A673 (cell line): ENCODE measurements at regions of chr15 and their contacts with region 1.

Region 1: DNA sequence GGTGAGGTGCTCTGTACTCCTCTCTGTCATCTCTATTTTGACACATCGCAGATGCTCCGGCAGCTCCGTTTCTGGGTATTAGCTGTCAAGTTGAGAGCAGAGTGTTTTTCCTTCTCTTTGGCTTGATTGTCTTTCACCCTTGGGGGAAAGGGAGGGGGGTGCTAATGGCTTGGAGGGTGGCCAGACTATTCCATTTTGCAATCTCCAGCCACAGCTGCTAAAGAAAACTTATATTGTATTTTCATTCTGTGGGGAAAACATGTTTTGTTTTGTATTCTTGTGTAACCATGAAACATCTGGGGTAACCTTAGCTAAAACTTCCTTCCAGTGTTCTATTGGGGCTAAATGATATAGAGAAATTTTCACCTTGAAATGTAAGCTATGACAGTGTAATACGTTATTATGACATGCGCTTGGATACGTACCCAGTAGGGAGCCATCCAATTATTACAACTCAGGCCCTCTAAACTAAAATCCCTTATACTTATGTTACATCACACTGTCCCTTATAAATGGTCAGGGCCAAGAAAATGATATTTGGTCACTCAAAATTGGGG is 14.0 kb upstream of the LARP6 start:
- DNase-seq: no peak
- H3K4me3 ChIP-seq: no peak overlapping the region
- H3K27ac ChIP-seq: peak overlapping the region; percentile 53
- H3K4me1 ChIP-seq: peaks cover 32% of the 10 kb centered on the region
- H3K27me3 ChIP-seq: no peaks in the 10 kb centered on the region
- CTCF ChIP-seq: no peak

Region 2: GRCh38 chr15:70492240-70493177 is 375.5 kb before region 1 on chr15:
- CTCF ChIA-PET with region 1: no interaction called
- POLR2A ChIA-PET with region 1: no interaction called
- intact Hi-C with region 1: no loop called
- DNase-seq: no peak
- H3K4me3 ChIP-seq: no peak overlapping the region
- H3K27ac ChIP-seq: no peak overlapping the region
- H3K4me1 ChIP-seq: peaks cover 23% of the 10 kb centered on the region
- H3K27me3 ChIP-seq: no peaks in the 10 kb centered on the region
- CTCF ChIP-seq: no peak

Region 3: GRCh38 chr15:70833897-70834765 is 33.9 kb before region 1 on chr15:
- CTCF ChIA-PET with region 1: interaction called, 12 read pairs
- POLR2A ChIA-PET with region 1: no interaction called
- intact Hi-C with region 1: loop called (anchors 5 kb)
- DNase-seq: peak; percentile 84
- H3K4me3 ChIP-seq: no peak overlapping the region
- H3K27ac ChIP-seq: peak overlapping the region; percentile 81
- H3K4me1 ChIP-seq: peaks cover 31% of the 10 kb centered on the region
- H3K27me3 ChIP-seq: no peaks in the 10 kb centered on the region
- CTCF ChIP-seq: no peak

Region 4: DNA sequence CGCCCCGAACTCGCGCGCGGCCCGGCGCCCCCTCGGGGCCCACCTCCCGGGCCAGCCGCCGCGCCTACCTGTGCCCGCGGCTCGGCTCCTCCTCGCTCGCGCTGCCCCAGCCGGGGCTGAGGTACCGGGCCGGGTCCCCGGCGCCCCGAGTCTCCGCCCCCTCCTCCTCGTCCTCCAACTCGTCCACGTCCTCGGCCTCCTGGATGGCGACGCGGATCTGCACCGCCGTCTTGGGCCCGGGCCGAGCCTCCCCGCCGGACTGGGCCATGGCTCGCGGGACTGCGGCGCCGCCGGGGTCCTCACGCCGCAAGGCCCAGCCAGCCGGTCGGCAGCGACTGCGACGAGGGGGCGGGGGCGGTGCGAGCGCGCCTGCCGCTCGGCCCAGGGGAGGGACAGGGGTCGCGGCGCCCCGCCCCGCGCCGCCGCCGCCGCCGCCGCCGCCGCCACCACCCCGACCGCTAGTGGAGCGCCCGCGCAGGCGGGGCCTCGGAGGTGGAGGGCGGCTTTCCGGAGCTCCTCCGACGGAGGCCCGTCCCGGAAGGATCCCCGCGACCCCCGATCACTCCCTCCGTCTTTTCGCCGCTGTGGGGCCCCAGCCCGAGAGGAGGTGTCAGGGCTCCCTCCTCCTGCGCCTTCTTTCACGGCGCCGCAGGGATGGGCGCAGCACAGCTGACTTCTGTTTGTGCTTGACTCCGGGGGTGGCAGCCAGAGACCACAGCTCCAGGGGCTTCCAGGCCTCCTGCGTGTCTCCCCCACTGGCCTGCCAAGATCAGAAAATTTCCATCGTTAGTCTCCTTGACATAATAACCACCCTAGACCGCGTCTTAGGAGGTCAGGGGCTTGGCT is 13.9 kb before region 1 on chr15 and contains the start of gene LARP6:
- CTCF ChIA-PET with region 1: interaction called, 21 read pairs
- POLR2A ChIA-PET with region 1: interaction called, 4 read pairs
- intact Hi-C with region 1: loop called (anchors 1 kb)
- DNase-seq: peak; percentile 71
- H3K4me3 ChIP-seq: peak within 1 kb of the TSS; percentile 86
- H3K27ac ChIP-seq: peak within 1 kb of the TSS; percentile 87
- H3K4me1 ChIP-seq: peaks cover 24% of the 10 kb centered on the region
- H3K27me3 ChIP-seq: no peaks in the 10 kb centered on the region
- CTCF ChIP-seq: no peak
- total RNA-seq, gene LARP6: 53.6 and 57.8 TPM in 2 replicates